A549 (cell line): ENCODE measurements at regions of chr2 and their contacts with region 1.

Region 1: DNA sequence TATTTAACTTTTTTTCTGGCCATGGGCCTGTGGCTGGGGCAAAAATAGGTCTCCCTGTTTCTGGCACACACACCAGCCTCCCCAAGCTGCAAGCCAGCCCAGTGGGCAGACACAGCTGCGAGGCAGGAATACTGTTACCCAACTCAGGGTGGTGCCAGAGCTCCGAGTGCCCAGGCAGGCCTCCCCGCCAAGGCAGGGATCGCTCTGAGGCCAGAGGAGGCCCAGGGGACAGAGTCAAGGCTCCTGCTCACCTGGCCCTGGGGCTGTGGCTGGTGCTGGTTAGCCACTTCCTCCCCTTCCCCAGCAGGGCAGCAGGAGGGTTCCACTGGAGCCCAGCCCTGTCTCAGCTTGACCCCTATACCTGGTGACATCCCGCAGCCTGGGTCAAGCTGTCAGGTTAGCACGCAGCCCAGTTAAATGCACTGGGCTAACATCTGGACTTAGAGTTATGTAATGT is 67.1 kb upstream of the EPAS1 start:
- DNase-seq: peak; percentile 35 to 84
- ATAC-seq: peak; percentile 85 to 90
- H3K4me3 ChIP-seq: no peak overlapping the region
- H3K27ac ChIP-seq: peak overlapping the region; percentile 93 to 95
- H3K4me1 ChIP-seq: peaks cover 62% of the 10 kb centered on the region
- CTCF ChIP-seq: peak; percentile 63
- EP300 ChIP-seq: no peak
- POLR2A ChIP-seq: no peak
- RAD21 ChIP-seq: peak; percentile 80 to 87

Region 2: GRCh38 chr2:46010925-46011490 is 219.1 kb before region 1 on chr2:
- CTCF ChIA-PET with region 1: interaction called, 15 read pairs
- POLR2A ChIA-PET with region 1: no interaction called
- DNase-seq: peak; percentile 62 to 72
- ATAC-seq: peak; percentile 73 to 92; a peak in 5 of 6 replicates
- H3K4me3 ChIP-seq: no peak overlapping the region
- H3K27ac ChIP-seq: peak overlapping the region; percentile 12 to 56; a peak in 4 of 6 replicates
- H3K4me1 ChIP-seq: peaks cover 19% of the 10 kb centered on the region
- CTCF ChIP-seq: peak; percentile 96
- EP300 ChIP-seq: no peak
- POLR2A ChIP-seq: no peak
- RAD21 ChIP-seq: peak; percentile 94 to 98

Region 3: DNA sequence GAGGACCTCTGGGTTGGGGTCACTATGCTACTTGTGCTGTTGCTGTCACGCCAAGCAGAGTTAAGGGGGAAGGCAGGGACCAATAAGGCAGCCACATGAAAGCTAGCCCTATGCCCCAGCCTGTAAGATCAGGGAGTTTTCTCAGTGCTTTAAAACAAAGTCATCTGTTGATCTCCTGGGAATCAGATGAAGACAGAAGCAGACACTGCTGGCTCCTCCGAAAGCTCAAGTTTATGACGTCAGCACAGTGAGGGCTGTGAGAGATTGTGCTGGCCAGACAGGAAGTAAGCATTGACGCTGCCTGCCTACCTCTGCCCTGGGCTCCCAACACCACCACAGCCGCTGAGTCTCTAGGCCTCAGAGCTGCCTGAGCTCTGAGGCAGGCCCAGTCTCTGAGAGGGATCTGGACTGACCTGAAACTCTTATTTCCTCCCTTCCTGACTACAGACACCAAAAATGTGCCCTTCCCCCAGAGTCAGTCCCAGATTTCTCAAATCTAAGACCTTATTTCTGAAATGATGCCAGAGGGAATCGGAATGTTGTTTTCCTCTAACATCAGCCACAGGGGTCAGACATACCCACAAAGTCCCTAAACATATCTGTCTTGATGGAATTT is 51.0 kb before region 1 on chr2:
- CTCF ChIA-PET with region 1: no interaction called
- POLR2A ChIA-PET with region 1: no interaction called
- DNase-seq: peak in 1 of 2 experiments; percentile 26
- ATAC-seq: peak in 1 of 2 experiments; percentile 53; a peak in 3 of 6 replicates
- H3K4me3 ChIP-seq: no peak overlapping the region
- H3K27ac ChIP-seq: peak overlapping the region in 1 of 2 experiments; percentile 67; a peak in 3 of 6 replicates
- H3K4me1 ChIP-seq: peaks cover 18% of the 10 kb centered on the region; the same call in 2 of the 3 replicates
- CTCF ChIP-seq: no peak
- EP300 ChIP-seq: no peak
- POLR2A ChIP-seq: no peak
- RAD21 ChIP-seq: no peak

Region 4: DNA sequence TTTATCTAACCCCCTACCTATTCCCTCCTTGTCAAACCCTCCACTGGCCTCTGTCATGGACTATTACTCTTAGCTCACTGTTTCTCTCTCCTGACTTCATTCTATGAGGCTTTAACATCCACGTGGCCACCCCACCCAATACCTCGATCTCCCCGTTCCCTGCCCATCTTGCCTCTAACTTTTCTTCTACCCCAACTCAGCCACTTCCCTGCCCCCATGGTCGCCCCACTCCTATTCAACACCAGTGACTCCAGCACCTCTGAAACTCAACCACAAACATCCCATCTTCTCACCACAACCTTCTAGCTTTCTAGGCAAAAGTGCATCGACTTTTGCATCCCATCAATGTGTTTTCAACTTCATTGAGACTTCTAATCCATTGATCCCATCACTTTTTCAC is 27.2 kb before region 1 on chr2:
- CTCF ChIA-PET with region 1: interaction called, 17 read pairs
- POLR2A ChIA-PET with region 1: no interaction called
- DNase-seq: no peak
- ATAC-seq: no peak
- H3K4me3 ChIP-seq: no peak overlapping the region
- H3K27ac ChIP-seq: no peak overlapping the region
- H3K4me1 ChIP-seq: no peaks in the 10 kb centered on the region
- CTCF ChIP-seq: no peak
- EP300 ChIP-seq: no peak
- POLR2A ChIP-seq: no peak
- RAD21 ChIP-seq: no peak

Region 5: GRCh38 chr2:46296840-46297545 is 66.8 kb after region 1 on chr2 and contains the start of gene EPAS1:
- CTCF ChIA-PET with region 1: interaction called, 18 read pairs
- POLR2A ChIA-PET with region 1: interaction called, 22 read pairs
- DNase-seq: peak; percentile 89 to 96
- ATAC-seq: peak; percentile 74 to 79
- H3K4me3 ChIP-seq: peak within 1 kb of the TSS; percentile 92
- H3K27ac ChIP-seq: peak within 1 kb of the TSS; percentile 81 to 91
- H3K4me1 ChIP-seq: peaks cover 41% of the 10 kb centered on the region
- CTCF ChIP-seq: no peak
- EP300 ChIP-seq: no peak
- POLR2A ChIP-seq: peak; percentile 94
- RAD21 ChIP-seq: no peak; a peak in 1 of 5 replicates
- polyA plus RNA-seq, gene EPAS1: 143 and 150 TPM in 2 replicates

Region 6: GRCh38 chr2:46364797-46365457 is 134.8 kb after region 1 on chr2:
- CTCF ChIA-PET with region 1: interaction called, 19 read pairs
- POLR2A ChIA-PET with region 1: no interaction called
- DNase-seq: peak; percentile 50 to 71
- ATAC-seq: peak in 1 of 2 experiments; percentile 70; a peak in 3 of 6 replicates
- H3K4me3 ChIP-seq: no peak overlapping the region
- H3K27ac ChIP-seq: peak overlapping the region in 1 of 2 experiments; percentile 60; a peak in 2 of 6 replicates
- H3K4me1 ChIP-seq: peaks cover 27% of the 10 kb centered on the region
- CTCF ChIP-seq: peak; percentile 94
- EP300 ChIP-seq: no peak
- POLR2A ChIP-seq: no peak
- RAD21 ChIP-seq: peak; percentile 94 to 96